ENCODE measurements at regions of chr17 and their contacts with region 1.

Region 1: GRCh38 chr17:17496189-17497064 is at the start of gene RASD1:
- DNase-seq: no peak
- H3K4me3 ChIP-seq: peak within 1 kb of the TSS; percentile 58 to 77 (median 62)
- H3K27ac ChIP-seq: peak within 1 kb of the TSS; percentile 80 to 87 (median 86)
- H3K4me1 ChIP-seq: peaks cover 18 to 43% (median 20%) of the 10 kb centered on the region in 3 donors
- H3K27me3 ChIP-seq: peaks cover 0 to 20% (median 0%) of the 10 kb centered on the region in 4 donors
- CTCF ChIP-seq: peak; percentile 90 to 98 (median 96)
- POLR2A ChIP-seq: peak in 3 of 4 donors; percentile 50 to 98 (median 97)
- total RNA-seq, gene RASD1: 1.1 to 8.4 (median 4.3) TPM

Region 2: DNA sequence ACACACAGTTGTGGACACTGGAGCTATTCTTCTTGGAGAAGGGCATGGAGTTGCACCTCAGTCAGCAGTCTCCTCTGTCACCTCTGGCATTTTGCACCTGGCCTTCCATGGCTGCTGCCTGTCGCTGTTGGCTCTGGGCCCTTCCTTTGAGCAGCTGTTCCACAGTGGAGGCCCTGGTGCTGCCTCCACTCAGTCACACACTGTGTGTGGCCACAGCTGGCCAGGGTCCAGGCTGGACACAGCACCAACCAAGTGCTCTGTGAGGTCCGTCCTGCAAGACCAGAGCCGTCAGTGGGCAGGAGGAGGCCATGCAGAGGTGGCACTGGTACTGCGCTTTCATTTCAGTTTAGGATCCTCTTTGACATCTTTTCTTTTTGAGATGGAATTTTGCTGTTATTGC is 41.3 kb before region 1 on chr17:
- intact Hi-C with region 1: no loop called
- DNase-seq: no peak
- H3K4me3 ChIP-seq: no peak overlapping the region
- H3K27ac ChIP-seq: no peak overlapping the region
- H3K4me1 ChIP-seq: no peaks in the 10 kb centered on the region
- H3K27me3 ChIP-seq: peaks cover 0 to 13% (median 0%) of the 10 kb centered on the region in 4 donors
- CTCF ChIP-seq: no peak
- POLR2A ChIP-seq: no peak

Region 3: DNA sequence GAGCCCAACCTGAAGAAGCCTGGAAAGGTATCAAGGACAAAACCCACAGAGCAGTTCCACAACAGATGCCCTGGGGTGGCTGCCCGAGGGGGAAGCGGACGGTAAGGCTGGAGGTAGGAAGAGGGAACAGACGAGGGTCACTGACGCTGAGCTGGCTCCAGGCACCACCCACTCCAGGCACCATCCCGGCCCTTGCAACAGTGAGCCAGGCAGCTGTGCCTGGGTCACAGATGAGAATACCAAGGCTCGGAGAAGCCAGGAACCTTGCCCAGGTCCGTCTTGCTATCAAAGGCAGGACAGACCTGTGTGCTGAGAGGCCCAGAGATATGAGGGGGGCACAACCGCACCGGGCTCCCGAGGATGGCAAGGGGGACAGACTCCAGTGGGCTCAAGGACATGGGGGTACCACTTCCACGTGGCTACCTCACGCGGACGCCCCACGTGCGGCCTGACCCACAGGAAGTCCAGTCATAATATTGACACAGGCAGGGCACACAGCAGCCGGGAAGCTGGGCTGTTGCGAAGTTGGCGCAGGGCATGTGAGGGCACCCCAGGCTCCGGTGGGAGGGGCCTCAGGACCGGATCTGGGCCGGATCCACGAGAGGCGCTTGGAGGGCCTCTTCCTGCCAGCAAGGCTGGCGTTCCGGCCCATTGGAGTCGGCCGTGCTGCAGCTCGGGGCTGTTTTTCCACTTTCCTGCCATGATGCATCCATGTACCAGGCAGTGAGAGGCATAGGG is 65.2 kb after region 1 on chr17:
- intact Hi-C with region 1: no loop called
- DNase-seq: no peak
- H3K4me3 ChIP-seq: peak overlapping the region in 1 of 4 donors; percentile 39
- H3K27ac ChIP-seq: peak overlapping the region; percentile 76 to 87 (median 84)
- H3K4me1 ChIP-seq: peaks cover 0 to 46% (median 25%) of the 10 kb centered on the region in 3 donors
- H3K27me3 ChIP-seq: no peaks in the 10 kb centered on the region
- CTCF ChIP-seq: no peak
- POLR2A ChIP-seq: peak in 1 of 4 donors; percentile 6

Region 4: GRCh38 chr17:17641621-17642409 is 145.4 kb after region 1 on chr17:
- intact Hi-C with region 1: loop called (anchors 5 kb)
- DNase-seq: no peak
- H3K4me3 ChIP-seq: no peak overlapping the region
- H3K27ac ChIP-seq: no peak overlapping the region
- H3K4me1 ChIP-seq: peaks cover 0 to 15% (median 2%) of the 10 kb centered on the region in 3 donors
- H3K27me3 ChIP-seq: peaks cover 0 to 3% (median 0%) of the 10 kb centered on the region in 4 donors
- CTCF ChIP-seq: peak; percentile 89 to 94 (median 92)
- POLR2A ChIP-seq: no peak

Region 5: DNA sequence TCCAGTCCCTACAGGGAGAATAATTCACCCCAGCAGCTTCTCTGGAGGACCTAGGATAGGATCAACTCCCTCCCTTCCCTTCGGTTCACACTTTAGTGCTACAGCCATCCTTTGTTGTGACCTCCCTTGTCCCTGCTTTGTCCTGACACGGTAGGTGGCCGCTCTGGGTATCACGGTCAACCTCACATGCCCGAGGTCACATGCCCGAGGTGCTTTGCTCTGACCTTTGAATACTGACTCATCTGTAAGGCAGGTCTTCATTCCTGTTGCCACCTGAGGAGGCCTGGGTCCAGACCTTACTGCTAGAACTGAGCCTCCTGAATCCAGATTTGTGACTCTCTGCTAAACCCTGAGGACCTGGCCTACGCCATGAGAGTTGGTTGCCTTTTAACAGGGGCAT is 706.9 kb after region 1 on chr17:
- intact Hi-C with region 1: no loop called
- DNase-seq: no peak
- H3K4me3 ChIP-seq: no peak overlapping the region
- H3K27ac ChIP-seq: no peak overlapping the region
- H3K4me1 ChIP-seq: peaks cover 0 to 60% (median 2%) of the 10 kb centered on the region in 3 donors
- H3K27me3 ChIP-seq: no peaks in the 10 kb centered on the region
- CTCF ChIP-seq: no peak
- POLR2A ChIP-seq: no peak